Kidney (tissue), 22 donors: ENCODE measurements at regions of chr15 and their contacts with region 1.

Region 1: GRCh38 chr15:88657326-88658069 is 18.7 kb downstream of the ISG20 start:
- DNase-seq: peak in 3 of 5 donors; percentile 52 to 65 (median 53)
- H3K4me3 ChIP-seq: no peak overlapping the region
- H3K27ac ChIP-seq: no peak overlapping the region
- H3K4me1 ChIP-seq: no peaks in the 10 kb centered on the region
- H3K27me3 ChIP-seq: no peaks in the 10 kb centered on the region
- CTCF ChIP-seq: peak; percentile 40

Region 2: DNA sequence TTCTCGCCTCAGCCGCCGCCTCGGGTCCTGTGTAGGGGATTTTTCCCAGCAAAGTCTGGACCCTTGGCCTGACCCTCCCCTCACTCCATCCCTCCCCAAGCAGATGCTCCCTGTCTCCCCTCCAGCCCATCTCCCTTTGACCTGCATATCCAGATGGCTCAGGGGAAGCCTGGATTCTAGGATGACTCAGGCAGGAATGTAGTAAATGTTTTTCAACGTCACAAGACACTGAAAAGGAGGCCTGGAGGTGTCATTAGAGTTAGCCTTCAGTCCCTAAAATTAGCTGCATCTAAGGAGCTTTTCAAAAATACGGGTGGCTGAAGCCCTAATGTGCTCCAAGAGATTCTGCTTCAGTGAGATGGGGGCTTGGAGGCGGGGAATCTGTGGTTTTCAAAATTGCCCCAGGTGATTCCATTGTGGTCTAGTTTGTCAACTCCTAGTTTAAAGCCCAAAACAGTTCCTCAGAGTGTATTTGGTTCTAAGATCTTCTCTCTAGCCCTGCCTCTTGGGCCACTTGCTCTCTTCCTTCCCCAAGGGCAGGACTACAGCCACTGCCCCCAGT is 153.0 kb after region 1 on chr15:
- intact Hi-C with region 1: no loop called
- DNase-seq: no peak
- H3K4me3 ChIP-seq: no peak overlapping the region
- H3K27ac ChIP-seq: no peak overlapping the region
- H3K4me1 ChIP-seq: no peaks in the 10 kb centered on the region
- H3K27me3 ChIP-seq: no peaks in the 10 kb centered on the region
- CTCF ChIP-seq: no peak

Region 3: DNA sequence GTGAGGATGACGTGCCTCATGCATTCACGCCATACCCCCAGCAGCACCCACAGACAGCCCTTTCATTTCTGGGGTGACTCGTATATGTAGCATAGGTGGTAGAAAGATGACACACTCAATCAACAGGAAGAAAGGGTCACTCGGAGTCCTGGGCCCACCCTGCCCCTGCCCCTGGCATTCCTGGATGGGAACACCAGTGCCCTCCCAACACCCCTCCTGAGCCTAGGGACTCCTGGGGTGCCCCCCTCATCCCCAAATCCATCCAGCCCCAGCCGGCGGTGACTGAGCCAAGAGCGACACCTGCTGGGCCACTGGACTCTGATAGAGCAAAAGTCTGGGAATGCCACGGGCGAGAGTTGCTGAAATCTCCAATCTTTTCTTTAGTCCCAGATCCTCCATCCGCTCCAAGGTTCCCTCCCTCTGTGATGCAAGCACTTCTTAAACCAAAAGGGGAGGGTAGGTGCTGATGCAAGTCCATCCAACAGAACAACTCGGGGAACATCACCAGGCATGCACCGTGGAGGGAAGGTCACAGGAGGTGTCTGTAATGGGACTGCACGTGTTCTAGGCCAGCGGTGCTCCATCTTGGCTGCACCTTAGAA is 176.8 kb after region 1 on chr15:
- intact Hi-C with region 1: loop called (anchors 10 kb)
- DNase-seq: peak in 4 of 5 donors; percentile 55 to 79 (median 63)
- H3K4me3 ChIP-seq: no peak overlapping the region
- H3K27ac ChIP-seq: no peak overlapping the region
- H3K4me1 ChIP-seq: no peaks in the 10 kb centered on the region
- H3K27me3 ChIP-seq: no peaks in the 10 kb centered on the region
- CTCF ChIP-seq: peak; percentile 36